Spleen (tissue), 13 donors: ENCODE measurements at regions of chr22 and their contacts with region 1.

Region 1: GRCh38 chr22:20568989-20569769 is 61.8 kb downstream of the MED15 start:
- DNase-seq: peak; percentile 89
- H3K4me3 ChIP-seq: peak overlapping the region in 1 of 8 donors; percentile 11
- H3K27ac ChIP-seq: peak overlapping the region; percentile 23 to 83 (median 64)
- H3K4me1 ChIP-seq: peaks cover 42 to 82% (median 72%) of the 10 kb centered on the region in 6 donors
- H3K27me3 ChIP-seq: no peaks in the 10 kb centered on the region
- CTCF ChIP-seq: no peak
- POLR2A ChIP-seq: no peak

Region 2: DNA sequence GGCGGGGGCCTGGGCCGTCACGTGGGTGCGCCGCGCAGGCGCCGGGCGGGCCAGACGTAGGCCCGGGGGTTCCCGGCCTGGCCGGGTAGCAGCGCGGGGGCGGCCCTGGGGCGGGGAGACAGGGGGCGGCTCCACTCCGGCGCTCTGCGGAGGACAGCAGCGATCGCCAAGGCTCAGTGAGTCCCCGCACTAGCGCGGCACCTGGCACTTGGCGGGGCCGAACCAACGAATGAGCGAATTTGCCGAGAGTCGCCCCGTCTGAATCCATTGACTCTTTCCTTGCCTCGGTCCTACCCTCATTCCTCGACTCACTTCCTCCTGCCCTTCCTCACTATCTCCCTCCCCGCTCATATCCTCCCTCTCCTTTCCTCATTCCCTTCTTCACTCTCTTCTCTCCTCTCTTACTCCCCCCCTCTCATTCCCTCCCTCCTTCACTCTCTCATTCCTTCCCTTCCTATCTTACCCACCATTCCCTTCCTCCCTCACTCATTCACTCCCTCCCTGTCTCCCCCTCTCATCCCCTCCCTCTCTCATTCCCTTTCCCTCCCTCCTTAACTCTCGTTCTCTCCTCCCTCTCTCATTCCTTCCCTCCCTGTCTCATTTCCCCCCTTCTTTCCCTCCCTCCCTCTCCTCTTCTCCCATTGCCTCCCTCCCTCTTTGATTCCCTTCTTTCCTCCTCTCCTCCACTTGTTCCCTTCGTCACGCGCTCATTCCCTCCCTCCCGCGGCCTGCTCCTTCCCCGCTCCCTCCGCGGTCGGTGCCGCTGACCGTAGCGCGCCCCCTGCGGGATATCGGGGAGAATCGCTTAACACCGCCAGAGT is 73.1 kb before region 1 on chr22:
- intact Hi-C with region 1: no loop called
- DNase-seq: peak; percentile 99
- H3K4me3 ChIP-seq: peak overlapping the region; percentile 60 to 92 (median 75)
- H3K27ac ChIP-seq: peak overlapping the region; percentile 90 to 96 (median 92)
- H3K4me1 ChIP-seq: peaks cover 13 to 52% (median 30%) of the 10 kb centered on the region in 6 donors
- H3K27me3 ChIP-seq: no peaks in the 10 kb centered on the region
- CTCF ChIP-seq: peak; percentile 82 to 95 (median 89)
- POLR2A ChIP-seq: no peak

Region 3: GRCh38 chr22:20509344-20510047 is 59.7 kb before region 1 on chr22:
- intact Hi-C with region 1: loop called (anchors 10 kb)
- DNase-seq: peak; percentile 79
- H3K4me3 ChIP-seq: peak overlapping the region; percentile 74 to 95 (median 89)
- H3K27ac ChIP-seq: peak overlapping the region; percentile 70 to 96 (median 92)
- H3K4me1 ChIP-seq: peaks cover 32 to 77% (median 58%) of the 10 kb centered on the region in 6 donors
- H3K27me3 ChIP-seq: no peaks in the 10 kb centered on the region
- CTCF ChIP-seq: no peak
- POLR2A ChIP-seq: peak in 1 of 3 donors; percentile 34

Region 4: DNA sequence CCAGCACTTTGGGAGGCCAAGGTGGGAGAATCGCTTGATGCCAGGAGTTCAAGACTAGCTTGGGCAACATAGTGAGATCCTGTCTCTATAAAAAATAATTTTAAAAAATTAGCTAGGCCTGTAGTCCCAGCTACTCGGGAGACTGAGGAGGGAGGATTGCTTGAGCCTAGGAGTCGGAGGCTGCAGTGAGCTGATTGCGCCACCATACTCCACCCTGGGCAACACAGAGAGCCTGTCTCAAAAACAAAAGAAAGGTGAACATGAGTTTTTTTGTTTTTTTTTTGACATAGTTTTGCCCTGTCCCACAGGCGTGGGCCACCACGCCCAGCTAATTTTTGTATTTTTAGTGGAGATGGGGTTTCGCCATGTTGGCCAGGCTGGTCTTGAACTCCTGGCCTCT is 44.1 kb before region 1 on chr22:
- intact Hi-C with region 1: no loop called
- DNase-seq: no peak
- H3K4me3 ChIP-seq: no peak overlapping the region
- H3K27ac ChIP-seq: no peak overlapping the region
- H3K4me1 ChIP-seq: peaks cover 21 to 94% (median 51%) of the 10 kb centered on the region in 6 donors
- H3K27me3 ChIP-seq: no peaks in the 10 kb centered on the region
- CTCF ChIP-seq: no peak
- POLR2A ChIP-seq: no peak

Region 5: GRCh38 chr22:20725987-20726558 is 156.9 kb after region 1 on chr22:
- intact Hi-C with region 1: no loop called
- DNase-seq: peak; percentile 41
- H3K4me3 ChIP-seq: no peak overlapping the region
- H3K27ac ChIP-seq: no peak overlapping the region
- H3K4me1 ChIP-seq: peaks cover 0 to 12% (median 2%) of the 10 kb centered on the region in 6 donors
- H3K27me3 ChIP-seq: no peaks in the 10 kb centered on the region
- CTCF ChIP-seq: no peak
- POLR2A ChIP-seq: no peak

Region 6: GRCh38 chr22:20761536-20761935 is 192.4 kb after region 1 on chr22:
- intact Hi-C with region 1: no loop called
- DNase-seq: no peak
- H3K4me3 ChIP-seq: no peak overlapping the region
- H3K27ac ChIP-seq: no peak overlapping the region
- H3K4me1 ChIP-seq: no peaks in the 10 kb centered on the region
- H3K27me3 ChIP-seq: no peaks in the 10 kb centered on the region
- CTCF ChIP-seq: no peak
- POLR2A ChIP-seq: no peak